Activated CD8-positive, alpha-beta memory T cell treated with anti-CD3 and anti-CD28 coated beads, Interleukin-2, amount 10 ng/mL, durations not matched to agents 7 days and 5 days (primary cell): ENCODE measurements at regions of chr9 and their contacts with region 1.

Region 1: DNA sequence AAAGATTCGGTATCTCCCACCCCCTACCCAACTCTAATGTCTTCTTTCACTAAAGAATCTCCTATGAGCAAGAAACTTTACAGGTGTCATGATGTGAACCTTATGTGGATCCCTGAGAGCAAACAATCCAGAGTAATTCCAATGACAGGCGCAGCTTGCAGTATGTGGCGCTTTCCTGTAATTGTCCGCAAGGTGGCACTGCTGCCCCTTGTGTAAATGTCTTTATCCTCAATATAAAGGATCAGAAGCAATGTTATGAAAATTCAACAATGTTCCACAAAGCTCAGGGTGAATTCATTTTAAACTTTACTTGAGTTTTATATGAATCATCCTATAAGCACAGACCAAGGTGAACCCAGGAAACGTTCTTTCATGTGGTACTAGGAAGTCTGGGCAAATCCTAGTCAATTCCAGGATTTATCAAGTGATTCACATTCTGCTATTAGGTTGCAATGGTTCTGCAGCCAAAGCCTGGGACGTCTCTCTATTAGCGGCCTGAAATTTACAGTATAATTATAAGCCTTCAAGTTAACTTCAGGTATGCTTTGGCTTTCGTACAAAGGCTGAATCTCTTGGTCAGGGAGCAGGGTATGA is 113.7 kb downstream of the TRPM6 start:
- DNase-seq: peak; percentile 79
- ATAC-seq: peak; percentile 60
- H3K4me3 Mint-ChIP-seq: no peak overlapping the region
- H3K27ac Mint-ChIP-seq: no peak overlapping the region
- H3K4me1 Mint-ChIP-seq: peaks cover 16% of the 10 kb centered on the region
- H3K27me3 Mint-ChIP-seq: peaks cover 15% of the 10 kb centered on the region

Region 2: DNA sequence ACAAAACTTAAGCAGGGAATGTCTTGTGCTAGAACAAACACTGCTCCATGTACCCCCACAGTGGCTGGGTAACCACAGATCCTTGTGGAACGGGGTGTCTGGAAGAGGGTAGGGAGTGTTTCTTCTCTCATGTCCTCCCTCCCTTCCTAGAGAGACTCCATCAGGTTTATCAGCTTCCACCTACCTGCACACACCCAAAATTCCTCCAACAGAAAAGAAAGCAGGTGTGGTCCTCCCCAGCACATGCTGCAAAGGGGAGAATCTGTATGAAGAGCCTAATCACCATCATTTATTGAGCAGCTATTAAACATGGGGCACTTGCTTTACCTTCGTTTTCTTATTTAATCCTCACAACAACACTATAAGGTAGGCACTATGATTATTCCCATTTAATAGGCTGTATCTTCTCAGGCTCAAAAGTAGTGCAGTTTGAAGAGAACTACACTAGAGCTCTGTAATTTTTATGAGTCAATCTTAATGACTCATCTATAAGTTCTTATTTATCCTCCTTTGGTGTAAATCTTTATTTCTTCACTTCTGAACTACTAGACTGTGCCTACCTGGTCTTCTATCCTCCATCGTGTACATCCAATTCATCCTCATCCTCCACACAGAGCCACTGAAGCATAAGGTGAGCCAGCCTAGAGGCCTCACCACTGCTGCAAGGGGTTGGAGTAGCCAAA is 147.1 kb after region 1 on chr9:
- CTCF ChIA-PET with region 1: no interaction called
- DNase-seq: no peak
- ATAC-seq: no peak
- H3K4me3 Mint-ChIP-seq: no peak overlapping the region
- H3K27ac Mint-ChIP-seq: no peak overlapping the region
- H3K4me1 Mint-ChIP-seq: no peaks in the 10 kb centered on the region
- H3K27me3 Mint-ChIP-seq: peaks cover 5% of the 10 kb centered on the region

Region 3: DNA sequence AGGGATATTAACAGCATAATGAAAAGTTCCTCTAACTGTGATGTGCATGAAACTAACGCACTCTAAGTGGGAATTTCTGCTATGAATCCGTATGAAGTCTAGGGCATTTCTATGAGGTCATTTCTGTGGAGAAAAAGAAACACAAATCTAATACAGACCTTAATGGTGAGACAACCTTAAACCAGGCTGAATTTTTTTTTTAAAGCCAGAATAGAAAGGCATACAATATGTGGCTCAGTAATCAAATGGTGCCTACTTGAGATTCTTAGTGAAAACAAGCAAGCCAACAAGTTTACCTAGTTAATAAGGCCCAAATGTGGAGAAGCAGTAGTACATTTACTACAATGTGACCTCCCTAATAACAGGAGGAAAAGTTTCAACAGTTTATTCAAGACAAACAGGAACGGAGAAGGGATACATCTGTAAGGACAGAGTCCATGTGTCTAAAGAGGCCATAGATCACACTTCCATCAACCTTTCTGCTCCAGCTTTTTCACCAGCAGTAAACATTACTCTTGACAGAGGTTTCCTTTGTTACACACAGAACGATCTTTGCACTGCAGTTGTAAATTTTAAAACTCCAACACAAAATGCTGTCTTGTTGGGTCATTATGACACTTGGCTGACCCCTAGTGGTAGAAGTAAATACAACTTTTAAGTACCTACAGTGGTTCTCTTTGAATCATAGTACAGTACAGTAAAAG is 227.9 kb after region 1 on chr9:
- CTCF ChIA-PET with region 1: interaction called, 104 read pairs
- DNase-seq: no peak
- ATAC-seq: peak; percentile 89
- H3K4me3 Mint-ChIP-seq: no peak overlapping the region
- H3K27ac Mint-ChIP-seq: no peak overlapping the region
- H3K4me1 Mint-ChIP-seq: peaks cover 5% of the 10 kb centered on the region
- H3K27me3 Mint-ChIP-seq: no peaks in the 10 kb centered on the region

Region 4: GRCh38 chr9:75027187-75028107 is 253.5 kb after region 1 on chr9:
- CTCF ChIA-PET with region 1: interaction called, 34 read pairs
- DNase-seq: peak; percentile 77
- ATAC-seq: peak; percentile 45
- H3K4me3 Mint-ChIP-seq: peak overlapping the region; percentile 98
- H3K27ac Mint-ChIP-seq: peak overlapping the region; percentile 93
- H3K4me1 Mint-ChIP-seq: peaks cover 37% of the 10 kb centered on the region
- H3K27me3 Mint-ChIP-seq: no peaks in the 10 kb centered on the region

Region 5: GRCh38 chr9:75083188-75083970 is 309.4 kb after region 1 on chr9:
- CTCF ChIA-PET with region 1: interaction called, 17 read pairs
- DNase-seq: peak; percentile 76
- ATAC-seq: peak; percentile 9
- H3K4me3 Mint-ChIP-seq: no peak overlapping the region
- H3K27ac Mint-ChIP-seq: peak overlapping the region; percentile 75
- H3K4me1 Mint-ChIP-seq: peaks cover 40% of the 10 kb centered on the region
- H3K27me3 Mint-ChIP-seq: no peaks in the 10 kb centered on the region